Lower leg skin (tissue), 4 donors: ENCODE measurements at regions of chr20 and their contacts with region 1.

Region 1: GRCh38 chr20:4613718-4614620 is 107.7 kb upstream of the PRND start:
- DNase-seq: peak in 1 of 2 donors; percentile 60
- H3K4me3 ChIP-seq: no peak overlapping the region
- CTCF ChIP-seq: no peak
- POLR2A ChIP-seq: no peak

Region 2: GRCh38 chr20:4383966-4384365 is 230.0 kb before region 1 on chr20:
- intact Hi-C with region 1: loop called (anchors 5 kb)
- DNase-seq: no peak
- H3K4me3 ChIP-seq: no peak overlapping the region
- CTCF ChIP-seq: no peak
- POLR2A ChIP-seq: no peak

Region 3: DNA sequence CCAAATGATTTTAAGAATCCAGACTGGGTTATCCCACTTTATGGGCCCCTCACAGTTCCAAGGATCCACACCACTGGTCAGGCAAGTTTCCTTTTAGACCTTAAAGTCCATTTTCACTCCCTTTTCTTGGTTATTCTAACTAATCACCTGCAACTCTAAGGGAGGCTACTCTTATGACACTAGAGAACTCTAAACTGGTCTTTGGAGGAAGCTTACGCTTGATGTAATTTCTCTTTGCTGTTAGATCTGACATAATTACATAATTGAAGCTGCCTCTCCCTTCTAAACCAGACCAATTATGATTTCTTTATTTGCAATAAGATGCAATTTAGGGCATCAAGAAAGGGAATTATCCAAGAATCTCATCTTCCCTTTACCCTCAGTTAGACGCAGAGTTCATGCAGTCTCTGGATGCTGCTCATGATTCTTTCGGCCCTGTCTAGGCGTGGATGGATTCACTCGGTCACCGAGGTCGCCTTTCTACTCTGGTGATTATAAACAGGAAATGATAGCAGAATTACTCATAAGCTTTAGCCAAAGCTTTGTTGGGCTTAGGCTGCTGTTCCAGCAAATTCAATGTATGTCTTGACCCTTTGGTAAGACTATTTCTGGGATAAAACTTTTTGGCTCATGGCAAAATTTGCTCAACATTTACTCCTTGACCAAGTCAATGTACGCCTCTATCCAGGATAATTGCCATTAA is 58.6 kb before region 1 on chr20:
- intact Hi-C with region 1: no loop called
- DNase-seq: no peak
- H3K4me3 ChIP-seq: no peak overlapping the region
- CTCF ChIP-seq: no peak
- POLR2A ChIP-seq: no peak

Region 4: DNA sequence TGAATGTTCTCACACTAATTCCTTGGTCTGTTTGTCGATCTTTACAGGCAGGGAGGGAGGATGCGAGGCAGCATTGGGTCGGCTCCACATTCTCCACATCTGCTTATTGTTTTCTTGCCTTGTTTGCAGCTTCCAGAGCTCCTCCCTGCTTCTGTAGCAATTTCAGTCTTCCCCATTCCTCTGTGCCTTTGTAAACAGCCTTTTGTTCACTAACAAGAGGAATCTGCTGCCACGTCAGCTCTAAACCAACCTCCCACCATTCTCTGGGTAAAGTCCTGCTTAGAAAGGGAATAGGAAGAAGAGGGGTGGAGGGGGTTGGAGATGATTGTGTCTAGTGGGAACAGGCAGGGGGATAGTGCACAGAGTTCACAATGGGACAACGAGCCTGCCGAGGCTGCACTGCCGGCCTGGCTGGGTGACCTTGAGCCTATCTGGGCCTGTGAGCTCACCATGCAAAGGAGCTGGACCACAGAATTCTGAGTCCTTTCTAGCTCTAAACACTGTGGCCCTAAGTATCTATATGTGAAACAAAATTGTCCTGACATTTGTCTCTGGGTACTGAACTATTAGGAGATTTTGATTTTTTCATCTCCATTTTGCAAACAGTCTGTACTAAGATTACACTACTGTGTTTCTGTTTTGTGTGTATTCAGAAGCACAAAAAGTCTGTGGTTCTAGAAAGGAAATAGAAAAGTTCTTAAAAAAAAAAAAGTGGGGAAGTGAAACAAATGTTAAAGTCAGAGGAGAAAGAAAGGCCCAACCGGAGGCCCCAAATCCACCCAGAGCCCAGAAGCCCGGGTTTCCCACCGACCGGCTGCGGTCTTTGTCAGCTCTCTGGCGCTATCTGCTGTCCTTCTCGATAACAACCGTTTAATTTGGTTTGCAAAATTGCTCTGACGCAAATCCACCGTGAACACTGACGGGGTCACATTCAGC is 106.3 kb after region 1 on chr20:
- intact Hi-C with region 1: loop called (anchors 2 kb)
- DNase-seq: peak; percentile 79 to 95
- H3K4me3 ChIP-seq: no peak overlapping the region
- CTCF ChIP-seq: peak in 1 of 3 donors; percentile 81
- POLR2A ChIP-seq: no peak